ENCODE measurements at regions of chr9 and their contacts with region 1.

Region 1: GRCh38 chr9:92133949-92134604 is 18.9 kb upstream of the SPTLC1 start:
- DNase-seq: peak; percentile 87 to 93
- ATAC-seq: peak; percentile 88
- H3K4me3 ChIP-seq: no peak overlapping the region
- H3K27ac ChIP-seq: no peak overlapping the region
- H3K4me1 ChIP-seq: no peaks in the 10 kb centered on the region
- H3K27me3 ChIP-seq: no peaks in the 10 kb centered on the region

Region 2: DNA sequence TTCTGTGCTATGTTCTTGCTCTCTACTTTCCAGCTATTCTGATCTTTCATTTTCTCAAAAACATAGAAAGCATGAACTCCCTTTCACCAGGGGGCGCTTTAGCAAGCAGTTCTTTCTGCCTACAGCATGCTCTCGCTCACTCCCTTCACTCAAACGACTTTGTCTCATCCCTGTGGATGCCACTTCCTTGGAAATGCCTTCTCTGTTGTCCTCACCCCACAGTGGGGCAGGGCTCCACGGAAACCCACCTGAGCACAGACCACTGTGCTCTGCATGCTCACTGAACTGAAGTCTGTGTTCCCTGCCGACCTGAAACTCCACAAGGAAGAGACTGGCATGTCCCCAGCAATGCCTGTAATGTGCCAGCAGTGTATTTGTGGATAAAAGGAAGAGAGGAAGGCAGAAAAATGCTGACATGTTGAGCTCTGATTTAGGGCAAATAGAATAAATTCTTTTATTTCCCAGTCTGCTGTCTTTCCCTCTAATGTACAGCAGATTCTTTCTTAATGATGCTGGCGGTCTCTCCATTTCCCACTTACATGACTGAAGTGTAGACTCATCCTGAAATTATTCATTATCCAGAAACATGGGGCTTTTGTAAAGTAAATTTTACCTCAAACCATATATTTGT is 179.1 kb before region 1 on chr9:
- intact Hi-C with region 1: no loop called
- DNase-seq: no peak
- ATAC-seq: no peak
- H3K4me3 ChIP-seq: no peak overlapping the region
- H3K27ac ChIP-seq: no peak overlapping the region
- H3K4me1 ChIP-seq: no peaks in the 10 kb centered on the region
- H3K27me3 ChIP-seq: no peaks in the 10 kb centered on the region

Region 3: GRCh38 chr9:92234514-92234913 is 100.4 kb after region 1 on chr9:
- intact Hi-C with region 1: loop called in 1 of 2 experiments (anchors 10 kb)
- DNase-seq: no peak
- ATAC-seq: no peak
- H3K4me3 ChIP-seq: no peak overlapping the region
- H3K27ac ChIP-seq: no peak overlapping the region
- H3K4me1 ChIP-seq: no peaks in the 10 kb centered on the region
- H3K27me3 ChIP-seq: no peaks in the 10 kb centered on the region